H1 (cell line): ENCODE measurements at regions of chr13 and their contacts with region 1.

Region 1: GRCh38 chr13:59771272-59771671 is 392.5 kb downstream of the DIAPH3 start:
- DNase-seq: no peak
- H3K4me3 ChIP-seq: no peak overlapping the region
- H3K27ac ChIP-seq: no peak overlapping the region
- H3K4me1 ChIP-seq: no peaks in the 10 kb centered on the region; a peak in 1 of 7 replicates
- H3K27me3 ChIP-seq: no peaks in the 10 kb centered on the region
- CTCF ChIP-seq: peak in 2 of 3 experiments; percentile 51 to 52; a peak in 3 of 4 replicates
- EP300 ChIP-seq: no peak
- POLR2A ChIP-seq: no peak
- RAD21 ChIP-seq: peak; percentile 73 to 75

Region 2: GRCh38 chr13:59533561-59534555 is 237.4 kb before region 1 on chr13:
- CTCF ChIA-PET with region 1: no interaction called
- POLR2A ChIA-PET with region 1: no interaction called
- DNase-seq: no peak
- H3K4me3 ChIP-seq: no peak overlapping the region
- H3K27ac ChIP-seq: no peak overlapping the region
- H3K4me1 ChIP-seq: peaks cover 0 to 6% (median 3%) of the 10 kb centered on the region in 4 experiments; a peak in 5 of 7 replicates
- H3K27me3 ChIP-seq: no peaks in the 10 kb centered on the region
- CTCF ChIP-seq: no peak
- EP300 ChIP-seq: no peak
- POLR2A ChIP-seq: no peak
- RAD21 ChIP-seq: no peak

Region 3: GRCh38 chr13:59677966-59678814 is 93.1 kb before region 1 on chr13:
- CTCF ChIA-PET with region 1: interaction called, 94 read pairs
- POLR2A ChIA-PET with region 1: no interaction called
- DNase-seq: no peak
- H3K4me3 ChIP-seq: no peak overlapping the region
- H3K27ac ChIP-seq: no peak overlapping the region
- H3K4me1 ChIP-seq: peaks cover 0 to 10% (median 3%) of the 10 kb centered on the region in 4 experiments; a peak in 4 of 7 replicates
- H3K27me3 ChIP-seq: no peaks in the 10 kb centered on the region
- CTCF ChIP-seq: peak in 2 of 3 experiments; percentile 64 to 87; a peak in 2 of 4 replicates
- EP300 ChIP-seq: no peak
- POLR2A ChIP-seq: no peak
- RAD21 ChIP-seq: peak; percentile 94 to 95

Region 4: GRCh38 chr13:59690857-59691500 is 80.3 kb before region 1 on chr13:
- CTCF ChIA-PET with region 1: interaction called, 16 read pairs
- POLR2A ChIA-PET with region 1: no interaction called
- DNase-seq: no peak
- H3K4me3 ChIP-seq: no peak overlapping the region
- H3K27ac ChIP-seq: no peak overlapping the region
- H3K4me1 ChIP-seq: peaks cover 0 to 4% (median 2%) of the 10 kb centered on the region in 4 experiments; a peak in 4 of 7 replicates
- H3K27me3 ChIP-seq: no peaks in the 10 kb centered on the region
- CTCF ChIP-seq: no peak
- EP300 ChIP-seq: no peak
- POLR2A ChIP-seq: no peak
- RAD21 ChIP-seq: no peak

Region 5: DNA sequence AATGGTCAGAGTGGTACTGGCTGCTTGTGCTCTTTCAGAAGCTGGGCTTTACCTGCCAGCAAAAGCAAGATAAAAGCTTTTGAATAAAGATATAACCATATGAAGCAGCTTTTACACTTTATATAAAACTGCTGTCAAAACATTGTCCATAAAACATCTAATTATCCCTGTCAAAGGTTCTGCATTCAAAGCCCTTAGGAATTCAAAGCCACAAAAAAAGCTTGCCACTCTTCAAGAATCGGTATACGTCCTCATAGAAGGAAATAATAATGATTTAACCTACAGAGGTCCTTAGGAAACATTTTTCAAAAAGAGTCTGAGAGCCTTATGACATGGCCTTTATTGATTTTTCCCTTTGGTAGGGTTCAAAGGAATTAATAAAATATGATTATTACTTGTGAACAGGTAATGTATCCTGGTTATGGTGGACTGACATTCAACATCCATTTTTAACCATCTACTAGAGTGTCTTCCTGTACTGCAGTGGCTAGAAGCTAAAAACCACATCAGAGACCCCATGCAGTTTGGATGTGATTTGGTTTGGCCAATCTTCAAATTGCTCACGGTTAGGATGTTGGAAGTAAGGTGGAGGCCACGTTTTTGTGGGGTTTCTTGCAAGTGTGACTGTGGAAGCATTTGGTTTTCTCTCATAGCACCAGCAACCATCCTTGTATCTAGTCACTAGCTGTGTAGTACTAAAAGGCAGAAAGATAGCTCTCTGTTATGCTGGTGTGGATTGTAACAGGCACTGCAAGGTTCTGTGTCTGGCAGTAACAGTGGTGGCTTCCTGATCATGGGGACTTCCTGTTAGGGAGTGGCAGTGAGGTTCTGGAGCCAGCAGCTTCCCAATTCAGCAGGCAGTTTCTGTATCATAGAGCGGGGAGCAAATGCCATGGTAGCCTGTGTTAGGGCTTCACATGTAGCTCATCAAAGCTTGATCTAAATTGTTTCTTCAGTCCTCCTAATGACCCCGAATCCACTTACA is 49.1 kb before region 1 on chr13:
- CTCF ChIA-PET with region 1: interaction called, 11 read pairs
- POLR2A ChIA-PET with region 1: no interaction called
- DNase-seq: no peak
- H3K4me3 ChIP-seq: no peak overlapping the region
- H3K27ac ChIP-seq: no peak overlapping the region
- H3K4me1 ChIP-seq: no peaks in the 10 kb centered on the region
- H3K27me3 ChIP-seq: no peaks in the 10 kb centered on the region
- CTCF ChIP-seq: no peak
- EP300 ChIP-seq: no peak
- POLR2A ChIP-seq: no peak
- RAD21 ChIP-seq: no peak

Region 6: GRCh38 chr13:59755632-59756290 is 15.5 kb before region 1 on chr13:
- CTCF ChIA-PET with region 1: interaction called, 19 read pairs
- POLR2A ChIA-PET with region 1: interaction called, 3 read pairs
- DNase-seq: no peak
- H3K4me3 ChIP-seq: no peak overlapping the region
- H3K27ac ChIP-seq: no peak overlapping the region
- H3K4me1 ChIP-seq: peaks cover 0 to 5% (median under 1%) of the 10 kb centered on the region in 4 experiments; a peak in 4 of 7 replicates
- H3K27me3 ChIP-seq: no peaks in the 10 kb centered on the region
- CTCF ChIP-seq: no peak
- EP300 ChIP-seq: no peak
- POLR2A ChIP-seq: no peak
- RAD21 ChIP-seq: no peak

Region 7: GRCh38 chr13:59782696-59783095 is 11.4 kb after region 1 on chr13:
- CTCF ChIA-PET with region 1: interaction called, 33 read pairs
- POLR2A ChIA-PET with region 1: no interaction called
- DNase-seq: no peak
- H3K4me3 ChIP-seq: no peak overlapping the region
- H3K27ac ChIP-seq: no peak overlapping the region
- H3K4me1 ChIP-seq: no peaks in the 10 kb centered on the region
- H3K27me3 ChIP-seq: no peaks in the 10 kb centered on the region
- CTCF ChIP-seq: no peak
- EP300 ChIP-seq: no peak
- POLR2A ChIP-seq: no peak
- RAD21 ChIP-seq: no peak

Region 8: DNA sequence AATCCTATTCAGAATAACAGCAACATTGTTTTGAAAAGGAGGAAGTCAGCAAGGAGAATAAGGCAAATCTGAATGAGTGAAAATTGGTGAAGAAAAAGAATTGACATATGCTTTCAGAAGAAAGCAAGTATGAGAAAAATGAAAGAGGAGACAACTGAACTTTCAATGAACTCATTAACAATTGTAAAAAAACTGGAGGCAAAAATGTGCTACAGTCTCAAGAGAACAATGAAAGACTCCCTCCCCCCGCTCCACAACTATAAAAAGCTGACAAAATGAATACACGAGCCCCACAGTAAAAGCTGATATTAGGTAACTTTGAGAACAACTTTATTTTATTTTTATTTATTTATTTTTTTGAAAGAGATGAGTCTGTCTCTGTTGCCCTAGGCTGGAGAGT is 19.4 kb after region 1 on chr13:
- CTCF ChIA-PET with region 1: interaction called, 33 read pairs
- POLR2A ChIA-PET with region 1: no interaction called
- DNase-seq: no peak
- H3K4me3 ChIP-seq: no peak overlapping the region
- H3K27ac ChIP-seq: no peak overlapping the region
- H3K4me1 ChIP-seq: peaks cover 0 to 11% (median 7%) of the 10 kb centered on the region in 4 experiments; a peak in 4 of 7 replicates
- H3K27me3 ChIP-seq: no peaks in the 10 kb centered on the region
- CTCF ChIP-seq: no peak
- EP300 ChIP-seq: no peak
- POLR2A ChIP-seq: no peak
- RAD21 ChIP-seq: no peak

Region 9: DNA sequence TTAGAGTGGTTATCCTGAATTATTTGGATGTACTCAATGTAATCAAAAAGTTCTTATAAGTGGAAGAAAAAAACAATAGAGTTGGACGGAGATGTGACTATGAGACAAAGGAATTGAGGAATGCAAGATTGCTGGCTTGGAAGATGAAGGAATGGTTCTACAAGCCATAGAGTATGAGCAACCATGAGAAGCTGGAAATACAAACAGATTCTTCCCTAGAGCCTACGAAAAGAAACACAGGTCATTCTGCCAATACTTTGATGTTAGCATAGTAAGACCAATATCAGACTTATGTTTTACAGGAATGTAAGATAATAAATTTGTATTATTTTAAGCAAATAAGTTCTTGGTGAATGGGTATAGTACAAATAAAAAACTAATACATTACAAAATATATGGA is 143.3 kb after region 1 on chr13:
- CTCF ChIA-PET with region 1: no interaction called
- POLR2A ChIA-PET with region 1: no interaction called
- DNase-seq: no peak
- H3K4me3 ChIP-seq: no peak overlapping the region
- H3K27ac ChIP-seq: no peak overlapping the region
- H3K4me1 ChIP-seq: no peaks in the 10 kb centered on the region
- H3K27me3 ChIP-seq: no peaks in the 10 kb centered on the region
- CTCF ChIP-seq: no peak
- EP300 ChIP-seq: no peak
- POLR2A ChIP-seq: no peak
- RAD21 ChIP-seq: no peak